Heart right ventricle (tissue), 16 donors: ENCODE measurements at regions of chr10 and their contacts with region 1.

Region 1: GRCh38 chr10:13659897-13660550 is 73.3 kb downstream of the PRPF18 start:
- DNase-seq: peak; percentile 73 to 78
- ATAC-seq: peak; percentile 60 to 78 (median 68)
- H3K4me3 ChIP-seq: peak overlapping the region in 1 of 10 donors; percentile 5
- H3K27ac ChIP-seq: peak overlapping the region in 8 of 10 donors; percentile 53 to 79 (median 68)
- H3K4me1 ChIP-seq: peaks cover 8 to 38% (median 22%) of the 10 kb centered on the region in 9 donors
- H3K27me3 ChIP-seq: no peaks in the 10 kb centered on the region
- CTCF ChIP-seq: peak; percentile 88 to 97 (median 94)

Region 2: DNA sequence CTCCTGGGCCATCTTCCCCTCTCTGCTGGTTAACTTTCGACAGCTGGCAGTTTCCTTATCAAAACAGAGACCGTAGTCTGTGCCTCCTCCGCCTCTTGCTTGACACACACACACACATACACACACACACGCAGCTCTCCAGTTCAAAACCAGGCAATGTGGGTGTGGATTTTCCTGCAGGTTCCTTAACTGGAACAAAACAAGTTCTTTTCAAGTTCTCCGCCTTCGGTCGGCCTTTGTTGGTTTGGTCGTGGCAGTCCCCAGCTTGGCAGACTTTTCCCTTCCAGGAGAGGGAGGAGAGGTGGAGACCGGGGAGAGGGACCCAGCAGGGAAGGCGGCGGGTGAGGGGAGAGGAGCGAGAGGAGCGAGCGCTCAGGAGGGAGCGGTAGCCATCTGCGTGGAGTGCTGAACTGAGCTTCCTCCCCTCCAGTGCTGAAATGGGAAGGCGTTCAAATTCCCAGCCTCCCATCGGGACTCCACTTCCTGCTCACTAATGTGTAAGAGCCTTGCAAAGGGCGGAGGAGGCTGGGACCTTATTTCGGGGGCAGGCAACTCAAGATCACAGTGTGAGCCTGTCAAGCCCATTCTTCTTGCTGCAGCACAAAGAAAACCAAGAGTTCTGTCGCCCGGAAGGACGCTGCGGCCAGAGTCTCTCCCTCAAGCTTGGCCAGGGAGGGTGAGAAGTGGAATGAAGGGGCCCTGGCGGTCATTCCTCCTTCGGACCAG is 47.3 kb after region 1 on chr10:
- intact Hi-C with region 1: loop called in 3 of 10 experiments (anchors 5 to 10 kb)
- DNase-seq: peak; percentile 80 to 94
- ATAC-seq: peak; percentile 86 to 93 (median 90)
- H3K4me3 ChIP-seq: peak overlapping the region; percentile 7 to 70 (median 63)
- H3K27ac ChIP-seq: peak overlapping the region; percentile 44 to 91 (median 84)
- H3K4me1 ChIP-seq: peaks cover 11 to 90% (median 76%) of the 10 kb centered on the region in 9 donors
- H3K27me3 ChIP-seq: no peaks in the 10 kb centered on the region
- CTCF ChIP-seq: peak in 1 of 9 donors; percentile 17

Region 3: DNA sequence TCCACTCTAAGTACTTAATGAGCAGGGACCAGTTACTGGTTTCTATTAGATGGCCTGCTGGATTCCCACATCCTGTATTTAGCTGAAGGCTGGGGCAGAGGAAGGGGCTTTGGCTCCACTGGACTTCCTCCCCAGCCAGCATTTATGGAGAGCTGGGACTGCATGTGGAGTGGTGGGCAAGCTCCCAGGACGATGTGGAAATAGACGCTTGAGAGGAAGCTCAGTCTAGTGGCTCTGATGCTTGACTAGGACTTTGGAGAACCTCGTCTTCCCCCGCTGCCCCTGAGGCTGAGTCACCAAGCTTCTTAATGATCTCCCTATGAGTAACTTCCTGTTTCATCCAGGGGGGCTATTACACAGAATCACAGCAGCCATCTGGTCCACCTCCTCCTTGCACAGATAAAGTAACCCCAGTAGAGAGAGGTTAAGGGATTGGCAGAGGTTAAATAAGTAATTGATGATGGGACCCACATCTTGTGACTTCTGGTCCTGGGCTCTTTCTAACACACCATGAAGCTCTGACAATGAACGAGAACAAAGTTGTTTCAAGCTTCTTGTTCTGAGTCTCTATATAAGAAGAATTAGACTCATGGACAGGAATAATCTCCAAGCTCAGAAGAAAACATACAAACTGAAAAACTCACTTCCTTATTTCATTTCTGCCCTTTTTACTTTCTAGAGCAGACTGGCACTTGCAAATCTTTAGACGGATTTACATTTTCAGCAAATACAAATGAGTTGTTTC is 53.0 kb after region 1 on chr10:
- intact Hi-C with region 1: loop called in 3 of 10 experiments (anchors 5 to 10 kb)
- DNase-seq: peak; percentile 67 to 80
- ATAC-seq: peak; percentile 67 to 90 (median 74)
- H3K4me3 ChIP-seq: no peak overlapping the region
- H3K27ac ChIP-seq: peak overlapping the region in 9 of 10 donors; percentile 20 to 85 (median 61)
- H3K4me1 ChIP-seq: peaks cover 9 to 71% (median 51%) of the 10 kb centered on the region in 9 donors
- H3K27me3 ChIP-seq: no peaks in the 10 kb centered on the region
- CTCF ChIP-seq: no peak

Region 4: GRCh38 chr10:13956826-13957225 is 296.8 kb after region 1 on chr10:
- intact Hi-C with region 1: loop called in 1 of 10 experiments (anchors 10 kb)
- DNase-seq: peak; percentile 35 to 59
- ATAC-seq: peak; percentile 60 to 89 (median 84)
- H3K4me3 ChIP-seq: no peak overlapping the region
- H3K27ac ChIP-seq: peak overlapping the region in 7 of 10 donors; percentile 9 to 65 (median 41)
- H3K4me1 ChIP-seq: peaks cover 0 to 31% (median 13%) of the 10 kb centered on the region in 9 donors
- H3K27me3 ChIP-seq: no peaks in the 10 kb centered on the region
- CTCF ChIP-seq: peak in 7 of 9 donors; percentile 31 to 60 (median 36)

Region 5: GRCh38 chr10:14093730-14094484 is 433.9 kb after region 1 on chr10:
- intact Hi-C with region 1: loop called in 2 of 10 experiments (anchors 10 kb)
- DNase-seq: no peak
- ATAC-seq: peak in 6 of 8 donors; percentile 25 to 63 (median 44)
- H3K4me3 ChIP-seq: no peak overlapping the region
- H3K27ac ChIP-seq: no peak overlapping the region
- H3K4me1 ChIP-seq: peaks cover 0 to 12% (median 5%) of the 10 kb centered on the region in 9 donors
- H3K27me3 ChIP-seq: no peaks in the 10 kb centered on the region
- CTCF ChIP-seq: peak; percentile 22 to 73 (median 62)